ENCODE measurements at regions of chr1 and their contacts with region 1.

Region 1: DNA sequence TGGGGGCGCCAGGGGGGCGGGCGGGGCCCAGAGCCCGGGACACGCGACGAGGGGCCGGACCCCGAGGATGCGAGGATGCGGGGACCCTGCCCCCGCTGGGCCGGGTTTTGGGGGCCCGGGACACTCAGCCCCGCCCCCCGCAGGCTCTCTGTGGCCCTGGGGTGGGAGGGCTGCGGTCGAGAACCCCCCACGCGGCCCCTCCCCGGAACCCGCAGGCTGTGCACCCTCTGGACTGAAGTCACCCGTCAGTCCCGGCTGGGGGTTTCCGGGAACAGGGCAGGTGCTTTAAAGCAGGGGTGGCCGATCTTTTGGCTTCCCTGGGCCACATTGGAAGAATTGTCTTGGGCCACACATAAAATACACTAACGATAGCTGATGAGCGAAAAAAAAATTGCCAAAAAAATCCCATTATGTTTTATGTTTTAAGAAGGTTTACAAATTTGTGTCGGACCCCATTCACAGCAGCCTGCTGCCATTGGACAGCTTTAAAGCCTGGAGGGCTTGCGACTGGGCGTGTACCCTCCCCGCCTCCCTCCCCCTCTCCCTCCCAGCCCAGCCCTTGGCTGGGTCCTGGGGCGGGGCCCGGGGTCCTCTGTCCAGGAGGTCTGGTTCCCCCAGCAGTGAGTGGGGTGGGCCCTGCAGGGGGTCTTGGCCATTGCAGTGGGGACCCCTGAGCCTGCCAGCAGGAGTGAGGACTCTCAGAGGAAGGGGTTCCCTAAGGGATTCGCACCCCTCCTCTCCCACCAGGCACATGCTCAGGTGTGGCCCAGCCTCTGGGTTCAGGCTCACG is 21.6 kb upstream of the C1orf159 start:
- DNase-seq: peak; percentile 94
- ATAC-seq: peak; percentile 73
- H3K4me3 ChIP-seq: peak overlapping the region in 4 of 5 experiments; percentile 44 to 60 (median 54)
- H3K4me3 Mint-ChIP-seq: peak overlapping the region; percentile 82
- H3K27ac ChIP-seq: peak overlapping the region; percentile 92 to 94
- H3K27ac Mint-ChIP-seq: peak overlapping the region; percentile 92
- H3K4me1 ChIP-seq: peaks cover 32 to 56% of the 10 kb centered on the region in 2 donors
- H3K4me1 Mint-ChIP-seq: peaks cover 37% of the 10 kb centered on the region
- H3K27me3 ChIP-seq: no peaks in the 10 kb centered on the region
- H3K27me3 Mint-ChIP-seq: no peaks in the 10 kb centered on the region
- CTCF ChIP-seq: no peak

Region 2: GRCh38 chr1:1157426-1157913 is 20.0 kb after region 1 on chr1:
- CTCF ChIA-PET with region 1: interaction called, 3 read pairs
- POLR2A ChIA-PET with region 1: interaction called, 18 read pairs
- intact Hi-C with region 1: no loop called
- DNase-seq: peak; percentile 74
- ATAC-seq: peak; percentile 64
- H3K4me3 ChIP-seq: peak overlapping the region; percentile 52 to 93 (median 87)
- H3K4me3 Mint-ChIP-seq: peak overlapping the region; percentile 86
- H3K27ac ChIP-seq: peak overlapping the region; percentile 94 to 97
- H3K27ac Mint-ChIP-seq: peak overlapping the region; percentile 89
- H3K4me1 ChIP-seq: peaks cover 8 to 23% of the 10 kb centered on the region in 2 donors
- H3K4me1 Mint-ChIP-seq: peaks cover 5% of the 10 kb centered on the region
- H3K27me3 ChIP-seq: no peaks in the 10 kb centered on the region
- H3K27me3 Mint-ChIP-seq: no peaks in the 10 kb centered on the region
- CTCF ChIP-seq: no peak

Region 3: DNA sequence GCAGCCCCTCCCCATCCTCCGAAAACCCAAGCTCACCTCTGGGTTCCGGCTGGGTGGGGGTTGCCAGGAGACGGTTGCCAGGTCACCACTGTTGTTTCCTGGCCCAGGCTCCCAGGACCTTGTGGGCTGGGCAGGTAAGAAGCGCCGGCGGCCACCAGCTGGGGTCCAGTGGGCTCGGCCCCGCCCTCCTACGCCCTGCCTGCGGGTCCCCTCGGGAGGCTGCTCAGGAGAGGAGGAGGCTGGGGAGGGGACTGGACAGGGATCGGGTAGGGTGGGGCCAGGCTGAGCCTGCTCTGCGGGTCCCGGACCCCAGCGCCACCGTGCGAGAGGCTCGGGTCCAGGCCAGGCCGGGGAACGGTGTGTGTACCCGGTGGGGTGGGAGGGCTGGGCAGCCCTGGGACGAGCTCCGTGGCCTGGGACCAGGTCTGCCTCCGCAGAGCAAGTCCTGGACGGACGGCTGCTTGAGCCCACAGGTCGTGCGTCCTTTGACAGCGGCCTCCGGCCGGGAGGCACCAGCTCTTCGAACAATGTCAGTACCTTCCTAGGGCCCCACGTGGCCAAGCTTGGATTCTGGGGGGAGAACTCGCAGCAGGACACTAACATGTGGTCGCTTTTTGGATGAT is 36.5 kb after region 1 on chr1 and contains the start of gene TTLL10:
- CTCF ChIA-PET with region 1: no interaction called
- POLR2A ChIA-PET with region 1: interaction called, 15 read pairs
- intact Hi-C with region 1: loop called (anchors 2 kb)
- DNase-seq: peak; percentile 84
- ATAC-seq: peak; percentile 31
- H3K4me3 ChIP-seq: peak within 1 kb of the TSS in 2 of 5 experiments; percentile 15 to 22
- H3K4me3 Mint-ChIP-seq: peak within 1 kb of the TSS; percentile 55
- H3K27ac ChIP-seq: no peak within 1 kb of the TSS
- H3K27ac Mint-ChIP-seq: peak within 1 kb of the TSS; percentile 50
- H3K4me1 ChIP-seq: peaks cover 57 to 70% of the 10 kb centered on the region in 2 donors
- H3K4me1 Mint-ChIP-seq: peaks cover 52% of the 10 kb centered on the region
- H3K27me3 ChIP-seq: peaks cover 0 to 44% (median 21%) of the 10 kb centered on the region in 4 experiments
- H3K27me3 Mint-ChIP-seq: peaks cover 12% of the 10 kb centered on the region
- CTCF ChIP-seq: no peak
- total RNA-seq, gene TTLL10: 0.37 and 0.61 TPM in 2 replicates

Region 4: GRCh38 chr1:1200851-1201810 is 63.7 kb after region 1 on chr1:
- CTCF ChIA-PET with region 1: no interaction called
- POLR2A ChIA-PET with region 1: no interaction called
- intact Hi-C with region 1: loop called (anchors 1 kb)
- DNase-seq: peak; percentile 94
- ATAC-seq: peak; percentile 84
- H3K4me3 ChIP-seq: peak overlapping the region in 4 of 5 experiments; percentile 28 to 58 (median 52)
- H3K4me3 Mint-ChIP-seq: peak overlapping the region; percentile 60
- H3K27ac ChIP-seq: no peak overlapping the region
- H3K27ac Mint-ChIP-seq: peak overlapping the region; percentile 32
- H3K4me1 ChIP-seq: peaks cover 17 to 18% of the 10 kb centered on the region in 2 donors
- H3K4me1 Mint-ChIP-seq: peaks cover 12% of the 10 kb centered on the region
- H3K27me3 ChIP-seq: peaks cover 0 to 19% (median 8%) of the 10 kb centered on the region in 4 experiments
- H3K27me3 Mint-ChIP-seq: no peaks in the 10 kb centered on the region
- CTCF ChIP-seq: no peak

Region 5: DNA sequence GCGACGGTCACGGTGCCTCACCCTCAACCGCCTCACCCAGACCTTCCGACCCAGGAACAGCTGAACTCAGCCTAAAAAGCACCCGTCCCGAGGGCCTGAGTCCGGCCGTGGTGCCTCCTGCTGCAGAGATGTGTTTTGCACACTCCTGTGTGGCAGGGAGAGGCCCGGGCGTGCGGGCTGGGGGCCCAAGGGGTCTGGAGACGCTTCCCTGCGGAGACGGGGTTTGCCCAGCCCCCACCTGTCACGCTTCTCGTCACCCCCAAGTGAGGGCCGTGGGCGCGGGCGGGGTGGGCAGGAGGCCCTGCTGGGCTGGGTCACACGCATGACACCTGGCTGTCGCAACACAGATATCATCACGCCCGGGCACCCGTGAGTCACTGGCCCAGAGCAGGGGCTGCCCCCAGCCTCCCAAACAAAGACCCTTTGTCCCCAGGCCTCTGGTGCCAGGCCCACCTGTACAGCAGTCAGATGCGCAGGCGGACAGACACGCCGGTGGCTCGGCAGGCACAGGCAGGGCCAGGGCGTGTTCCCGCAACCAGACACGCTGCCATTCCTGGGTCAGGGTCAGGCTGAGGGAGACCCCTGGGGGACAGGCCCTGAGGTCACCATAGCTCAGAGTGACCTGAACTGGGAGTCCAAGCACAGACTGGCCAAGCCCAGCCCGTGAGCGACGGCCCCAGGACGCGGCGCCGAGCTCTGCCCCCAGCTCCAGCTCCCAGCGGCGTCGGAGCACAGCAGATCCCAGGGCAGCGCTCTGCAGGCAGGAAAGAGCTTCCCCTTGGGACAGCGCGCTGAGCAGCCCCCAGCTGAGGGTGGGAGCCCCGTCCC is 100.6 kb after region 1 on chr1:
- CTCF ChIA-PET with region 1: no interaction called
- POLR2A ChIA-PET with region 1: interaction called, 15 read pairs
- intact Hi-C with region 1: no loop called
- DNase-seq: peak; percentile 58
- ATAC-seq: peak; percentile 55
- H3K4me3 ChIP-seq: no peak overlapping the region
- H3K4me3 Mint-ChIP-seq: peak overlapping the region; percentile 29
- H3K27ac ChIP-seq: no peak overlapping the region
- H3K27ac Mint-ChIP-seq: no peak overlapping the region
- H3K4me1 ChIP-seq: peaks cover 19% of the 10 kb centered on the region in 2 donors
- H3K4me1 Mint-ChIP-seq: peaks cover 24% of the 10 kb centered on the region
- H3K27me3 ChIP-seq: peaks cover 0 to 36% (median 8%) of the 10 kb centered on the region in 4 experiments
- H3K27me3 Mint-ChIP-seq: no peaks in the 10 kb centered on the region
- CTCF ChIP-seq: no peak

Region 6: DNA sequence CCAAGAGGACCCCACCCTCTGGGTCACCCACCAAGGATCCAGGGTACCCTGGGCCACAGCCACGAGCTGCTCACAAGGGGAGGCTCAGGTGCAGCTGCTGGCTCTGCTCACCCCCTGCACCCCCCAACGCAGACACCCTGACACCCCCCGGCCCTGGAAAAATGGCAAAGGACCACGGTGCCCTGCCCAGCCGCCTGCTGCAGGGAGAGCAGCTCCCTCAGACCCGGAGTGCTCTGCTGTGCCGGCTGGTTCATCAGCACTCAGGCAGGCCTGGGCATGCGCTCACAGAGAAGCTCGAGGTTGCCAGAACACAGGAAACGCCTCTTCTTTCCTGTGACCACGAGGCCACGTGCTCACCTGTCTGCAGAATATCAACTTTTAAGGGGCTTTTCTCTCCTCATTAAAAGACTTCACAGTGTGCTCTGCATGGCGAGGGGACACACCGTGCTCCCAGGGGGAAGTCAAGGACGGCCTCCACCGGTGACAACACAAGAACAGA is 113.4 kb after region 1 on chr1:
- CTCF ChIA-PET with region 1: interaction called, 7 read pairs
- POLR2A ChIA-PET with region 1: interaction called, 4 read pairs
- intact Hi-C with region 1: loop called (anchors 1 kb)
- DNase-seq: peak; percentile 85
- ATAC-seq: peak; percentile 71
- H3K4me3 ChIP-seq: no peak overlapping the region
- H3K4me3 Mint-ChIP-seq: peak overlapping the region; percentile 63
- H3K27ac ChIP-seq: peak overlapping the region; percentile 11 to 84
- H3K27ac Mint-ChIP-seq: peak overlapping the region; percentile 88
- H3K4me1 ChIP-seq: peaks cover 27 to 30% of the 10 kb centered on the region in 2 donors
- H3K4me1 Mint-ChIP-seq: peaks cover 16% of the 10 kb centered on the region
- H3K27me3 ChIP-seq: peaks cover 0 to 16% (median 8%) of the 10 kb centered on the region in 4 experiments
- H3K27me3 Mint-ChIP-seq: no peaks in the 10 kb centered on the region
- CTCF ChIP-seq: no peak